H1 (cell line): ENCODE measurements at regions of chr1 and their contacts with region 1.

Region 1: GRCh38 chr1:232695621-232696385 is 65.9 kb upstream of the SIPA1L2 start:
- DNase-seq: no peak
- H3K4me3 ChIP-seq: no peak overlapping the region
- H3K27ac ChIP-seq: no peak overlapping the region
- H3K4me1 ChIP-seq: peaks cover 0 to 2% (median 0%) of the 10 kb centered on the region in 4 experiments; a peak in 2 of 7 replicates
- H3K27me3 ChIP-seq: no peaks in the 10 kb centered on the region
- CTCF ChIP-seq: no peak
- EP300 ChIP-seq: no peak
- POLR2A ChIP-seq: no peak
- RAD21 ChIP-seq: no peak

Region 2: GRCh38 chr1:232684363-232685105 is 11.3 kb before region 1 on chr1:
- CTCF ChIA-PET with region 1: interaction called, 13 read pairs
- POLR2A ChIA-PET with region 1: no interaction called
- DNase-seq: no peak
- H3K4me3 ChIP-seq: no peak overlapping the region
- H3K27ac ChIP-seq: no peak overlapping the region
- H3K4me1 ChIP-seq: no peaks in the 10 kb centered on the region
- H3K27me3 ChIP-seq: no peaks in the 10 kb centered on the region; a peak in 2 of 7 replicates
- CTCF ChIP-seq: no peak
- EP300 ChIP-seq: no peak
- POLR2A ChIP-seq: no peak
- RAD21 ChIP-seq: no peak

Region 3: GRCh38 chr1:232722626-232723025 is 26.8 kb after region 1 on chr1:
- CTCF ChIA-PET with region 1: no interaction called
- POLR2A ChIA-PET with region 1: no interaction called
- DNase-seq: no peak
- H3K4me3 ChIP-seq: no peak overlapping the region
- H3K27ac ChIP-seq: no peak overlapping the region
- H3K4me1 ChIP-seq: peaks cover 1 to 7% (median 4%) of the 10 kb centered on the region in 4 experiments; a peak in 2 of 7 replicates
- H3K27me3 ChIP-seq: no peaks in the 10 kb centered on the region
- CTCF ChIP-seq: no peak
- EP300 ChIP-seq: no peak
- POLR2A ChIP-seq: no peak
- RAD21 ChIP-seq: no peak